Dorsolateral prefrontal cortex (tissue), 120 donors: ENCODE measurements at regions of chr21 and their contacts with region 1.

Region 1: GRCh38 chr21:26170471-26171257 is at the start of gene APP:
- DNase-seq: peak; percentile 67 to 90 (median 84)
- H3K4me3 ChIP-seq: peak within 1 kb of the TSS; percentile 62 to 98 (median 93)
- H3K27ac ChIP-seq: peak within 1 kb of the TSS; percentile 89 to 99 (median 97)
- H3K27me3 ChIP-seq: no peaks in the 10 kb centered on the region
- CTCF ChIP-seq: peak; percentile 59 to 100 (median 96)
- total RNA-seq, gene APP: 450 to 1,423 (median 1,116) TPM

Region 2: DNA sequence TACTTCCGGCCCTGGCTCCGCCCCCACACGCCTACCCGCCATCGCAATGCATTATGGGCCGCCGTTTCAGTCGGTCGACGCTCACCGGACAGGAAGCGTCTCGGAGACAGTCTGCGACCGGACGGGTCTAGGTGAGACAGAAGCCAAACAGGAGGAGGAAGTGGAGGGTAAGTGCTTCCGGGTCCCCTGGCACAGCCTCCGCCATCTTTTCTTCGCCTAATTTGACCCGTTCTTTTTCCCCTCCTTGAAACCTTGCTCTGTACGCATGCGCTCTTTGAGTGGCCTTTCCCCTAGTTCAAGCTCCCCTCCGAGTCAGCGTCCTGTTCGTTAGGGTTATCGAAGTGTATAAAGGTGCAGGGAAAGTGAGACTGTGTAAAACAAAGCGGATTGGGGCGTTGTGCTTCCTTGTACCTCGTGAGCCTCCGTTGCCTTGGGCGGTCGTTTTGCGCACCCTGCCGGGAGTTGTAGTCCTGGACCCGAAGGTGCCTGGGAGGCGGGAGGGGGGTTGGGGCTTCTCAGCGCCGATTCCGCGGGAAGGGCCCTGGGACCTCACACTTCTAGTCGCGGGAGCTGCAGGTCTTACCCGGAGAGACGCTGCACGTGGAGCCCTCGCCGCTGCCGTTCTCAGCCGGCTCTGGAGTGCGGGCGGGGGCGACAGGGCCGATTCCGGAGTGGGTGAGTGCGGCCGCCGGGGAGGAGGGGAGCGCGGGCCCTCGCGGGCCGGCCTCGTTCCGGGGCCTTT is 435.6 kb before region 1 on chr21 and contains the starts of genes ATP5PF and GABPA:
- intact Hi-C with region 1: loop called in 1 of 2 experiments (anchors 10 kb)
- DNase-seq: peak; percentile 93 to 98 (median 96)
- H3K4me3 ChIP-seq: peak within 1 kb of the TSS; percentile 56 to 99 (median 93)
- H3K27ac ChIP-seq: peak within 1 kb of the TSS; percentile 96 to 100 (median 100)
- H3K27me3 ChIP-seq: no peaks in the 10 kb centered on the region
- CTCF ChIP-seq: peak in 23 of 56 donors; percentile 5 to 35 (median 9)
- total RNA-seq, gene ATP5PF: 62.6 to 169 (median 131) TPM
- total RNA-seq, gene GABPA: 10.8 to 26.2 (median 17.9) TPM

Region 3: GRCh38 chr21:25895565-25896205 is 275.0 kb before region 1 on chr21:
- intact Hi-C with region 1: loop called in 1 of 2 experiments (anchors 5 kb)
- DNase-seq: peak in 1 of 10 donors; percentile 32
- H3K4me3 ChIP-seq: no peak overlapping the region
- H3K27ac ChIP-seq: peak overlapping the region in 53 of 59 donors; percentile 22 to 90 (median 69)
- H3K27me3 ChIP-seq: no peaks in the 10 kb centered on the region
- CTCF ChIP-seq: peak; percentile 54 to 90 (median 75)

Region 4: DNA sequence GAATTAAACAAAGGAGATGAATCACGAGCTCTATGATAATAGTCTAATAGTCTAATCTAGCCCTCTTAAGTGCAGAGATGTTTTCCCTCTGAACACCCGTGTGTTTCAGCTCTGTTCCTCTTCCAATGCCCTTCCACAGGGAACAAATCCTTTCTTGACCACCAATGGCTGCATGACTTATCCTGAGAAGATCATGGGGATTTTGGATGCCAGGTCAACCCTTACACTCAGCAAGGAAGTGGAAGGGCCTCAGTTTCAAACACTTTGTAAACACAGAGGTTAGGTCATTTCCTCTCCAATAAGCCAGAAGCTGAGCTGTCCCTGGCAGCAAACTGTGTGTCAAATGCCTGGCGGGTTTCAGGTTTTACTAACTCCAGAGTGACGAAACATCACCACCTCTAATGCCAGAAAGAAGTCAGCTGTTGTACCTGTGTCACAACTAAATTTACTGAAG is 235.9 kb before region 1 on chr21:
- intact Hi-C with region 1: no loop called
- DNase-seq: no peak
- H3K4me3 ChIP-seq: no peak overlapping the region
- H3K27ac ChIP-seq: peak overlapping the region in 44 of 59 donors; percentile 6 to 92 (median 52)
- H3K27me3 ChIP-seq: no peaks in the 10 kb centered on the region
- CTCF ChIP-seq: no peak

Region 5: DNA sequence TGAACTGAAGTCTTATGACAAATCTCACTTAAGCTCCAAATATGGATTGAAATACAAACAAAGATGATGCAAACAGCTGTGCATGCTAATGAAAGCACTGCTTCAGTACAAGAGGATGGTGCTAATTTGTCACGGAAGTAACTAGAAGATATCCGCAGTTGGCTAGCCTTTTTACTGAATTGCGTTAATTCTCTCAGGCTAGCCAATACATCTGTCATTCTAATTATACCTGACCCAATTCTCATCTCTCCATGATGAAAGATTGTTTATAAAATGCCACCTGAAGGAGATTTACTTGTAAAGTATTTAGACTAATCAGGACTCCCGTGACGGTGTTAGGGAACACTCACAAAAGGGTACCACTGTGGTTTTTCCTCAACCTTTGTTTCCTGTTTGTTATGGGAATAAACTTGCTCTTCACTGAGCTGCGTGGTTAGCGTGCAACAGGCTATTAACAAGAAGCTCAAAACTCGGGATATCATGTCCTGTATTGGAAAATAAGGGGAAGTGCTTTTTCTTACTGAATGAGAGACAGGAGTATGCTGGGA is 162.6 kb before region 1 on chr21:
- intact Hi-C with region 1: loop called in 1 of 2 experiments (anchors 5 kb)
- DNase-seq: no peak
- H3K4me3 ChIP-seq: peak overlapping the region in 51 of 59 donors; percentile 0 to 58 (median 23)
- H3K27ac ChIP-seq: peak overlapping the region; percentile 46 to 93 (median 82)
- H3K27me3 ChIP-seq: no peaks in the 10 kb centered on the region
- CTCF ChIP-seq: peak in 4 of 56 donors; percentile 8 to 19 (median 12)

Region 6: DNA sequence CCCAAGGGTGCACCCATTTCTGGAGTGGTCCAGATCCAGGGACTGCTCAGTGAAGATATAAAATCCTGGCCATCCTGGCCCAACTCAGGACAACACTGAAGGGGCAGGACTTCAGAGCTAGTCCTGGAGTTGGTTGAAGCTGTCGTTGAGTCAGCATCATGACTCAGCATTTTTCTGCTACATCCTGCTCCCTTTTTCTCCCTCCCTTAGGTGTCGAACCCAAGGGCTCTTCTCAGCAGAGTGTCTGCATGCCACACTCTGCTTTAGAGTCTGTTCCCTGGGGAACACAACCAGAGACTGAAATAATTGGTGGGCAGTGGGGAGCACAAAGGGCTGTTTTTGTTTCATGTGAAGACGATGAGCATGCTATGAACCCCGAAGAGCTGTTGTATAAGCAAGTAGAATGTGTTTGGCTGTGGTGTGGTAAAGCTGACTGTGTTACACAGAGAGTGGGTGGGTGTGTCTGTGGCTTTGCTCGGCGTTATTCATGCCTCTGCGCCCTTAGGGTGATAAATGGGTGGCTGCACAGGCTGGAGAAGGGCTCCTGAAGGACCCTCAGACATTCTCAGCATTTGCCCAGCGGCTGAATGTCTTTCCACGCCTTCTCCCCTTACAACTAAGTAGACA is 235.2 kb after region 1 on chr21:
- intact Hi-C with region 1: no loop called
- DNase-seq: no peak
- H3K4me3 ChIP-seq: no peak overlapping the region
- H3K27ac ChIP-seq: no peak overlapping the region
- H3K27me3 ChIP-seq: no peaks in the 10 kb centered on the region
- CTCF ChIP-seq: no peak

Region 7: DNA sequence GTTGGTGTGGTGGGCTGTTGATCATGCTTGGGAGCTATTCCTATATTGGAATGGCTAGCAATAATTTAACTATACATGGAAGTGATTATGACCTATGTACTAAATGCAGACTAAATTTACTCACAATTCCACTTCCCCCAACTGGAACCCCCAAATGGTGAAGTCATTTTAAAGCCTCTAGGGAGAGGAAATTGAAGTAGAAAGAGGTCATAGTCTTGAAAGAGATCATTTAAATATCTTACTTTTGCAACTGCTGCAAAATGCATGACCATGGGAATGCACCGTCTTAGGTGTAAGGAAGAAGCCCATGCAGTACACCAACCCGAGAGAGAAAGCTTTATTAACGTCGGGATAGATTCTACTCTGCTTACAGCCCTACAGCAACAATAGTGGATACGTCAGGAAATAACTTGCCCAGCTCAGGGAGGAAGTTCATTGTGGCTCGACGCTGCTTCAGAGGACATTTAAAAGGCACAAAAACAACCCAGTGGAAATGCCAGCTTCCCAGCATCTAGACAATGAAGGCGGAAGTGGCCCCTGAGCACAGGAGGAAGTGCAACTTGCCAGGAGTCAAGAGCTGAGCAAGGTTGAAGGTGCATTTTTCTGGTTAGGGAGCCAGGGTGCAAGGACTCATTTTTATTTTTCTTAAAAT is 375.9 kb after region 1 on chr21:
- intact Hi-C with region 1: no loop called
- DNase-seq: no peak
- H3K4me3 ChIP-seq: no peak overlapping the region
- H3K27ac ChIP-seq: peak overlapping the region in 16 of 59 donors; percentile 3 to 60 (median 35)
- H3K27me3 ChIP-seq: no peaks in the 10 kb centered on the region
- CTCF ChIP-seq: no peak

Region 8: GRCh38 chr21:26652854-26653253 is 482.2 kb after region 1 on chr21:
- intact Hi-C with region 1: no loop called
- DNase-seq: no peak
- H3K4me3 ChIP-seq: no peak overlapping the region
- H3K27ac ChIP-seq: no peak overlapping the region
- H3K27me3 ChIP-seq: no peaks in the 10 kb centered on the region
- CTCF ChIP-seq: no peak

Region 9: GRCh38 chr21:26715878-26716506 is 545.3 kb after region 1 on chr21:
- intact Hi-C with region 1: loop called (anchors 5 kb)
- DNase-seq: peak in 8 of 10 donors; percentile 44 to 66 (median 52)
- H3K4me3 ChIP-seq: peak overlapping the region in 1 of 59 donors; percentile 8
- H3K27ac ChIP-seq: peak overlapping the region in 2 of 59 donors; percentile 9 to 21
- H3K27me3 ChIP-seq: no peaks in the 10 kb centered on the region
- CTCF ChIP-seq: peak; percentile 64 to 92 (median 84)